GM18951 (cell line): ENCODE measurements at regions of chr1 and their contacts with region 1.

Region 1: GRCh38 chr1:234154320-234155251 is 218.7 kb upstream of the COA6 start:
- POLR2A ChIP-seq: no peak

Region 2: GRCh38 chr1:234309598-234310459 is 155.2 kb after region 1 on chr1:
- in situ Hi-C with region 1: loop called (anchors 25 kb)
- POLR2A ChIP-seq: no peak